CD4-positive, alpha-beta memory T cell (primary cell): ENCODE measurements at regions of chr2 and their contacts with region 1.

Region 1: GRCh38 chr2:8312861-8313830 is 368.7 kb upstream of the ID2 start:
- DNase-seq: peak in 1 of 5 donors; percentile 20
- H3K4me3 ChIP-seq: no peak overlapping the region
- H3K4me3 Mint-ChIP-seq: peak overlapping the region in 7 of 8 donors; percentile 52 to 72 (median 69)
- H3K27ac ChIP-seq: peak overlapping the region; percentile 9
- H3K27ac Mint-ChIP-seq: peak overlapping the region; percentile 52 to 94 (median 86)
- H3K4me1 ChIP-seq: peaks cover 68% of the 10 kb centered on the region
- H3K4me1 Mint-ChIP-seq: peaks cover 49 to 70% (median 64%) of the 10 kb centered on the region in 4 donors
- H3K27me3 ChIP-seq: no peaks in the 10 kb centered on the region
- H3K27me3 Mint-ChIP-seq: no peaks in the 10 kb centered on the region

Region 2: DNA sequence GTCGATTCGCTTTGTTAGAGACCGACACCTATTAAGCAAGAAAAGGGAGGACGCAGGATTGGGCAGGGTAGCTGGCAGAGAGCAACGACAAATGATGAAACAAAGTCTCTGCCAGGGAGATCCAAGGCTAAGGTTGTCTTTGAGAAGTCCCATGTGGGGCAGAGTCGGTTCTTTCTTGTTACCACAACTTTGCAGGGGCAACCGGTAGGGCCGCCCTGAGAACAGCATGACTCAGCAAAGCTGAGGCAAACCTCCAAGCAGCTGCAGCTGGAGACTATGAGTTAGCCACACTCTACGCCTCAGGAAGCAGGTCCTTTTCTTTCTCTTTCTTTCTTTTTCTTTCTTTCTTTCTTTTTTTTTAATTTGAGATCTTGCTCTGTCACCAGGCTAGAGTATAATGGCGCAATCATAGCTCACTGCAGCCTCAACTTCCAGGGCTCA is 83.6 kb before region 1 on chr2:
- CTCF ChIA-PET with region 1: no interaction called
- POLR2A ChIA-PET with region 1: no interaction called
- intact Hi-C with region 1: loop called (anchors 10 kb)
- DNase-seq: peak; percentile 8 to 43 (median 17)
- H3K4me3 ChIP-seq: no peak overlapping the region
- H3K4me3 Mint-ChIP-seq: peak overlapping the region in 3 of 8 donors; percentile 26 to 43 (median 31)
- H3K27ac ChIP-seq: no peak overlapping the region
- H3K27ac Mint-ChIP-seq: peak overlapping the region in 2 of 7 donors; percentile 4 to 48
- H3K4me1 ChIP-seq: peaks cover 8% of the 10 kb centered on the region
- H3K4me1 Mint-ChIP-seq: peaks cover 8 to 9% (median 9%) of the 10 kb centered on the region in 4 donors
- H3K27me3 ChIP-seq: no peaks in the 10 kb centered on the region
- H3K27me3 Mint-ChIP-seq: no peaks in the 10 kb centered on the region

Region 3: DNA sequence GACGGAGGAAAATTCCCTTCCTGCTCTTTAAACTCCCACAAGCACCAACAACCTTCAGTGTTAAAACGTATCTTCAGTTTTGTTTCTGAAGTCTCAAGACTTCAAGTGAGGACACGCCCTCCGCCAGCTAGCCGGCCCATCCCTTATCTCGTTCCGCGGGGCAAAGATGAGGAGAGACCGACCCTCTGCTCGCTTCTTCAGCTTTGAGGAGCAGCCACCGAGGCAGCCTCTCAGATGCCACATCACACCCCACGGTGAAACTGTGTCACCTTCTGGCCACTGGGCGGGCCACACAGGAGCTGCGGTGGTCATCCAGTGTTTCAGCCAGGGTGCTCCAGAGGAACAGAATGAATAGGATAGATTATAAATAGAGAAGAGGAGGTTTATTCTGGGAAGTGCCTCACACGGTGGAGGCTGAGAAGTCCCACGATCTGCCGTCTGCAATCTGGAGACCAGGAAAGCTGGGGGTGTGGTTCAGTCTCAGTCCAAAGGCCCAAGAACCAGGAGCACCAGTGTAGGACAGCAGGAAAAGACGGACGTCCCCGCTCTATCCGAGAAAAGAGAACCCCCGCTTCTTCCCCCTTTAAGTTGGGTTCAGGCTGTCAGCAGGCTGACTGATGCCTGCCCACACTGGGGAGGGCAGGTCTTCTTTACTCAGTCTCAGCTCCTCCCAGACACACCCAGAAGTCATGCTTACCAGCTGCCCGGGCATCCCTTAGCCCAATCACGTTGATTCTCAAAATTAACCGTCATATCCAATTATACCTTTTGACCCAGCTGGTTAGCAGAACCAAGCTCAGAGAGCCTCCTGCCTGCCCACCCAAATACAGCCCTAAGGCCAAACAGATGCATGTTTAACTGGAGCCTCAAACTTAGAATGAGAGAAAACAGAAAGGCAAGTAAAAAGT is 30.9 kb before region 1 on chr2:
- CTCF ChIA-PET with region 1: no interaction called
- POLR2A ChIA-PET with region 1: interaction called, 11 read pairs
- intact Hi-C with region 1: no loop called
- DNase-seq: peak in 4 of 5 donors; percentile 25 to 48 (median 30)
- H3K4me3 ChIP-seq: no peak overlapping the region
- H3K4me3 Mint-ChIP-seq: peak overlapping the region; percentile 79 to 88 (median 84)
- H3K27ac ChIP-seq: peak overlapping the region; percentile 20
- H3K27ac Mint-ChIP-seq: peak overlapping the region; percentile 62 to 93 (median 78)
- H3K4me1 ChIP-seq: peaks cover 21% of the 10 kb centered on the region
- H3K4me1 Mint-ChIP-seq: peaks cover 12 to 49% (median 32%) of the 10 kb centered on the region in 4 donors
- H3K27me3 ChIP-seq: no peaks in the 10 kb centered on the region
- H3K27me3 Mint-ChIP-seq: no peaks in the 10 kb centered on the region

Region 4: DNA sequence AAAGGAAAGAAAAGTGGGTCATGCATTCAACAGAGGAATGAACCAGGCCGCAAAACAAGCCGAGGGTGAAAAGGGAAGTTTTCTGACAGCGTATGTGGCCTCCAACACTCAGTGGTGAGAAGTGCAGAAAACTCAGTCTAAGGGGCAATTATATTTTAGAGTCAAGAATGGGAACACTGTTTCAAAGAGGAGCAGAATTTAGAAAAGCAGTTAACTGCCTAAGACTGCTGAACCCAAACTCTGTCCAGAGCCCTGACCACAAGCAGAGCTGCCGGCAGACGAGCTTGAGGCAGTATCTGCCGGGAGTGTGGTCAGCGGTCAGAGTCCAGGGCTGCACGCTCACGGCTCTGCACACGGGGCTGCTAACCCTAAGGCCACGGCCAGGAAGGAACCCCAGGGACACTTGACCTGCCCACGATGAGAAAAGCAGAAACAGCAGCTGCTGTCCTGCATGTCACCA is 21.8 kb after region 1 on chr2:
- CTCF ChIA-PET with region 1: no interaction called
- POLR2A ChIA-PET with region 1: interaction called, 18 read pairs
- intact Hi-C with region 1: no loop called
- DNase-seq: no peak
- H3K4me3 ChIP-seq: no peak overlapping the region
- H3K4me3 Mint-ChIP-seq: peak overlapping the region in 7 of 8 donors; percentile 2 to 76 (median 56)
- H3K27ac ChIP-seq: no peak overlapping the region
- H3K27ac Mint-ChIP-seq: peak overlapping the region in 5 of 7 donors; percentile 28 to 86 (median 74)
- H3K4me1 ChIP-seq: peaks cover 47% of the 10 kb centered on the region
- H3K4me1 Mint-ChIP-seq: peaks cover 23 to 72% (median 36%) of the 10 kb centered on the region in 4 donors
- H3K27me3 ChIP-seq: no peaks in the 10 kb centered on the region
- H3K27me3 Mint-ChIP-seq: no peaks in the 10 kb centered on the region

Region 5: DNA sequence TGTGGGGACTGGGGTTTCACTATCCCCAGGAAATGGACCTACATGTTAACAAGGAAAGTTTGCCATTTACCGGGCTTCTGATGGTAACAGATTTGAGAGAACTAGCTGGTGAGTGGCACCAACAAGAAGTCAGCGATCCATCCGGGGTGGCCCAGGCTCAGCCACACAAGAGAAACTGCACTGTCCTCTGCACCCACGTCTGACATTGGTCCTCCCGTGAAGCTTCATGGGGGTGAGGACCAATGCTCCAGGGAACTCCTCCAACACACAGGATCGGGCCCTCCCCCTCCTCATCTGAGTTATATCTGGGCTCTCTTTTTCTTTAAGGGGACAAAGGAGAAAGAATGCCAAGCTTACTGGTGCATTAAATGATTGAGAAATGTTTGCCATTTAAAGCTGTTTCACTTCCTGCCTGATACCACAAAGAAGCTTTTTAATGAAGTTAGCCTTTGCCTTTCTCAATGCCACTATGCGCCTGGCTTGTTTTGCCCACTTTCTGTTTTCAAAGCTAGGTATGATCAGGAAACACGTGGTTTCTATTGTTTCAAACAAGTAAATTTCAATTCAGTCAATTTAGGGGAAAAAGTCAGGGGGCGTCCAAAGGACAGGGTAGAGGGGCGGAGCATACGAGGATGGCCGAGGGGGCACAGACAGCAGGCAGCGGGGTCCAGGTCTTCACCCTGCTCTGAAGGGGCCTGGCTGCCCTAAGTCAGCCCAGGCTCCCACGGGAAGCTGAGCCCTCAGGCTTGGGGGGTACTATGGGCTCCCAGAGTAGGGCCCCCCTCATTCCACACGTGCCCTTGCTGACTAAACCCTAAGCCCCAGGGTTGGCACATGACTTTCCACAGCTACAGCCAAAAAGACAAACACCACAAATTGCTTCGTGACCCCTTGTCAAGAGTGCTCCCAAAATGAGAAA is 164.7 kb after region 1 on chr2:
- CTCF ChIA-PET with region 1: no interaction called
- POLR2A ChIA-PET with region 1: no interaction called
- intact Hi-C with region 1: no loop called
- DNase-seq: peak; percentile 55 to 66 (median 60)
- H3K4me3 ChIP-seq: peak overlapping the region; percentile 27 to 41
- H3K4me3 Mint-ChIP-seq: peak overlapping the region; percentile 75 to 94 (median 82)
- H3K27ac ChIP-seq: peak overlapping the region; percentile 70
- H3K27ac Mint-ChIP-seq: peak overlapping the region; percentile 92 to 98 (median 96)
- H3K4me1 ChIP-seq: peaks cover 95% of the 10 kb centered on the region
- H3K4me1 Mint-ChIP-seq: peaks cover 66 to 100% (median 88%) of the 10 kb centered on the region in 4 donors
- H3K27me3 ChIP-seq: no peaks in the 10 kb centered on the region
- H3K27me3 Mint-ChIP-seq: no peaks in the 10 kb centered on the region